WTC11 (cell line): ENCODE measurements at regions of chr3 and their contacts with region 1.

Region 1: GRCh38 chr3:47522082-47522987 is 8.8 kb upstream of the ELP6 start:
- DNase-seq: peak; percentile 85
- ATAC-seq: peak; percentile 84
- H3K4me3 Mint-ChIP-seq: no peak overlapping the region
- H3K27ac Mint-ChIP-seq: no peak overlapping the region
- H3K4me1 Mint-ChIP-seq: peaks cover 19% of the 10 kb centered on the region
- H3K27me3 Mint-ChIP-seq: peaks cover 19% of the 10 kb centered on the region
- CTCF ChIP-seq: peak; percentile 91

Region 2: DNA sequence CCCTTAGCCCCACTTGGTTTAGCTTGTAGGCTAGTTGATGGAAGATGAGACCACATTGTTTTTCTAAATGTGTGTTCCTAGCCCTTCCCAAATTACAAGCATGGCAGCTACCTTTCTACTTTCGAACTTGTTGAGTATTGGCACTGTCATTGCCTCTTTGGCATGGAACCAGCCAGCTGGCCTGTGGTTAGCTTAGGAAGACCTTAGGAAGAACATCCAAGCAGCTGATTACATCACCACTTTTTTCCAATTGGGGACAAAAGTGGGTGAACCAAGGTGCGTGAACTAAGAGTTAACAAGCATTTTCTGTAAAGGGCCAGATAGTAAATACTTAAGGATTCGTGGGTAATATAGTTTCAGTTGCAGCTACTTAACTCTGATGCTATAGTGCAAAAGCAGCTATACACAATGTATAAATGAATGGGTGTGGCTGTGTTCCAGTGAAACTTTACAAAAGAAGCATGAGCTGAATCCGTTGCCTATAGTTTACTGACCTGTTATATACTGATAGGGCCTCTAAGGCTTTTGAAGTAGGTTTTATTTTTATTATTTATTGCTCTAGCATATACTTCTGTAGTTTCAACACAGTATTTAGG is 231.1 kb before region 1 on chr3:
- CTCF ChIA-PET with region 1: no interaction called
- POLR2A ChIA-PET with region 1: no interaction called
- DNase-seq: no peak
- ATAC-seq: no peak
- H3K4me3 Mint-ChIP-seq: no peak overlapping the region
- H3K27ac Mint-ChIP-seq: no peak overlapping the region
- H3K4me1 Mint-ChIP-seq: peaks cover 5% of the 10 kb centered on the region
- H3K27me3 Mint-ChIP-seq: no peaks in the 10 kb centered on the region
- CTCF ChIP-seq: no peak

Region 3: DNA sequence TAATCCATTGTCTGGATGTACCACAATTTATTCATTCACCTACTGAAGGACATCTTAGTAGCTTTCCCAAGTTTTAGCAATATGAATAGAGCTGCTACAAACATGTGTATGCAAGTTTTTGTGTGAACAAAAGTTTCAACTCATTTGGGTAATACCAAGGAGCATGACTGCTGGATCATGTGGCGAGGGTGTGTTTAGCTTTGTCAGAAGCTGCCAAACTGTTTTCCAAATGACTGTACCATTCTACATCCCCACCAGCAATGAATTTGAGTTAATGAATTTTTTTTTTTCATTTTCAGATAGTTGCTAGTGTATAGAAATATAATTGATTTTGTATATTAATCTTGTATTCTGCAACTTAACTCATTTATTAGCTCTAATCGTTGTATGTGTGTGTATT is 11.1 kb after region 1 on chr3:
- CTCF ChIA-PET with region 1: interaction called, 17 read pairs
- POLR2A ChIA-PET with region 1: no interaction called
- DNase-seq: no peak
- ATAC-seq: no peak
- H3K4me3 Mint-ChIP-seq: no peak overlapping the region
- H3K27ac Mint-ChIP-seq: no peak overlapping the region
- H3K4me1 Mint-ChIP-seq: 0 out of 2 replicates have a peak, but pooled peaks cover 3% of the 10 kb centered on the region
- H3K27me3 Mint-ChIP-seq: no peaks in the 10 kb centered on the region
- CTCF ChIP-seq: no peak

Region 4: GRCh38 chr3:47565734-47566550 is 43.6 kb after region 1 on chr3:
- CTCF ChIA-PET with region 1: interaction called, 12 read pairs
- POLR2A ChIA-PET with region 1: no interaction called
- DNase-seq: peak; percentile 28
- ATAC-seq: peak; percentile 87
- H3K4me3 Mint-ChIP-seq: no peak overlapping the region
- H3K27ac Mint-ChIP-seq: no peak overlapping the region
- H3K4me1 Mint-ChIP-seq: no peaks in the 10 kb centered on the region
- H3K27me3 Mint-ChIP-seq: no peaks in the 10 kb centered on the region
- CTCF ChIP-seq: no peak

Region 5: DNA sequence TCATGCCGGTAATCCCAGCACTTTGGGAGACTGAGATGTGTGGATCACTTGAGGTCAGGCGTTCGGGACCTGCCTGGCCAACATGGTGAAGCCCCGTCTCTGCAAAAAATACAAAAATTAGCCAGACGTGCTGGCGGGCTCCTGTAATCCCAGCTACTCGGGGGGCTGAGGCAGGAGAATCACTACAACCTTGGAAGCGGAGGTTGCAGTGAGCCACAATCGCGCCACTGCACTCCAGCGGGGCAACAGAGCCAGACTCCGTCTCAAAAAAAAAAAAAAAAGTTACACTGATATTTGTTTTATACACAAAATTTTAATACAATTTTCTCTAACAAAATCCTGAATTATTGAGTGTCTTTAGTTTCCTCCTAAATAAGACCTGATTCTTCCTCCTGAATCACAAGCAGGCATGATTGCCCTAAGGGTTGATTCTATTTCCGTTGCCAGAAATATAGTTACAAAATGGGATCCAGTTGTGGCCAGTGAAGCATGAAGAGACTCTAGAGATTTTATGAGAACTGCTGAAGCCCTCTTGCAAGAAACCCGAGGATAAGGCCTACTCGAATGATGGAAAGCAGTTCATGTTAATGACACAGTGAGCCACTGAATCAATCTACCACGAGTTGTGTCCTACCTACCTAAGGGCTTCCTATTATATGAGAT is 269.0 kb after region 1 on chr3:
- CTCF ChIA-PET with region 1: interaction called, 21 read pairs
- POLR2A ChIA-PET with region 1: no interaction called
- DNase-seq: no peak
- ATAC-seq: no peak
- H3K4me3 Mint-ChIP-seq: no peak overlapping the region
- H3K27ac Mint-ChIP-seq: no peak overlapping the region
- H3K4me1 Mint-ChIP-seq: no peaks in the 10 kb centered on the region
- H3K27me3 Mint-ChIP-seq: 0 out of 2 replicates have a peak, but pooled peaks cover 4% of the 10 kb centered on the region
- CTCF ChIP-seq: no peak

Region 6: GRCh38 chr3:47836986-47837385 is 314.7 kb after region 1 on chr3:
- CTCF ChIA-PET with region 1: interaction called, 11 read pairs
- POLR2A ChIA-PET with region 1: no interaction called
- DNase-seq: no peak
- ATAC-seq: peak; percentile 20
- H3K4me3 Mint-ChIP-seq: no peak overlapping the region
- H3K27ac Mint-ChIP-seq: peak overlapping the region; percentile 67
- H3K4me1 Mint-ChIP-seq: peaks cover 27% of the 10 kb centered on the region
- H3K27me3 Mint-ChIP-seq: no peaks in the 10 kb centered on the region
- CTCF ChIP-seq: no peak